H1 (cell line): ENCODE measurements at regions of chr1 and their contacts with region 1.

Region 1: DNA sequence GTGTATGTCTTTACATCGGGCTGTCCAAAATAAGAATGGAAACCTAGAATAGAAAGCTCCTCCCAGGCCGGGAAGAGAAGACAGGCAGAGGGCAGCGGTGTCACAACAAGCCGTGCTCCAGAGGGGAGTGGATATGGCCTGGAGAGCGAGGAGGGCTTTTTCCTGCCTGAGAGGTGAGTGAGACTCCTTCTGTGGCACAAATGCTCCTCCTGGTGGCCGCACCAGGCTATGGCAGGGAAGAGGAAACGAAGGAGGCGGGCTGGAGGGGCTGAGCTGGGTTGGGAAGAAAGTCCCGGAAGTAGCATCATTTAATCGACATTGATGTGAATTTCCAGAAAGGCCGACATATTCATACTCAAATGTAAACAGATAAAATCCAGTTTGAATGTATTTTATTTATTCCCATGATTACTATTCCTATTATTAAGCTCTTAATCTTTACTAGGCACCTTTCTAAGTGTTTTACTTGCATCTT is 54.7 kb downstream of the MEF2D start:
- DNase-seq: peak in 1 of 2 experiments; percentile 96
- H3K4me3 ChIP-seq: no peak overlapping the region
- H3K27ac ChIP-seq: no peak overlapping the region
- H3K4me1 ChIP-seq: no peaks in the 10 kb centered on the region; a peak in 4 of 7 replicates
- H3K27me3 ChIP-seq: peaks cover 19 to 39% (median 33%) of the 10 kb centered on the region in 4 experiments
- CTCF ChIP-seq: peak; percentile 95 to 98 (median 96)
- EP300 ChIP-seq: no peak
- POLR2A ChIP-seq: no peak
- RAD21 ChIP-seq: peak; percentile 94 to 98

Region 2: GRCh38 chr1:156346636-156347035 is 99.2 kb before region 1 on chr1:
- CTCF ChIA-PET with region 1: interaction called, 10 read pairs
- POLR2A ChIA-PET with region 1: interaction called, 3 read pairs
- DNase-seq: no peak
- H3K4me3 ChIP-seq: no peak overlapping the region
- H3K27ac ChIP-seq: no peak overlapping the region
- H3K4me1 ChIP-seq: no peaks in the 10 kb centered on the region
- H3K27me3 ChIP-seq: no peaks in the 10 kb centered on the region
- CTCF ChIP-seq: no peak
- EP300 ChIP-seq: no peak
- POLR2A ChIP-seq: no peak
- RAD21 ChIP-seq: no peak

Region 3: DNA sequence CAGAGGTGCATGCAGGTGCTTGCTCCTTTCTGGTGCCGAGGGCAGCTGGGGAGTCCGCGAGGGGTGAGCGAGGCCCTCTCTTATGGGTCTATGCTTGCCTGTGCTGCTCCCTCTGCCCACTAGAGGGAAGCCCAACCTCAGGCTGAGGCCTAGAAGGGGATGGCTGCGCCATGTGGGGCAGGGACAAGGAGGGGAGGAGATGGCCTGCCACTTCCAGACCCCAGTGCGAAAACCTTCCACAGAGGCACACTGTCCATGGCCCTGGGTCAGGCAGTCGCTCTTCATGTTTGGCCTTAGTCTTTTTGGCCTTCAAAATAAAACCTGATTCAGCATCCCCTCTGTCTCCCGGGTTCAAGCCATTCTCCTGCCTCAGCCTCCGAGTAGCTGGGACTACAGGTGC is 62.8 kb before region 1 on chr1:
- CTCF ChIA-PET with region 1: interaction called, 574 read pairs
- POLR2A ChIA-PET with region 1: interaction called, 11 read pairs
- DNase-seq: peak; percentile 67 to 89
- H3K4me3 ChIP-seq: no peak overlapping the region
- H3K27ac ChIP-seq: no peak overlapping the region
- H3K4me1 ChIP-seq: peaks cover 4 to 7% (median 6%) of the 10 kb centered on the region in 4 experiments; a peak in 6 of 7 replicates
- H3K27me3 ChIP-seq: peaks cover 10 to 24% (median 22%) of the 10 kb centered on the region in 4 experiments
- CTCF ChIP-seq: peak in 2 of 3 experiments; percentile 94 to 100; a peak in 3 of 4 replicates
- EP300 ChIP-seq: no peak
- POLR2A ChIP-seq: no peak
- RAD21 ChIP-seq: peak; percentile 92 to 96

Region 4: DNA sequence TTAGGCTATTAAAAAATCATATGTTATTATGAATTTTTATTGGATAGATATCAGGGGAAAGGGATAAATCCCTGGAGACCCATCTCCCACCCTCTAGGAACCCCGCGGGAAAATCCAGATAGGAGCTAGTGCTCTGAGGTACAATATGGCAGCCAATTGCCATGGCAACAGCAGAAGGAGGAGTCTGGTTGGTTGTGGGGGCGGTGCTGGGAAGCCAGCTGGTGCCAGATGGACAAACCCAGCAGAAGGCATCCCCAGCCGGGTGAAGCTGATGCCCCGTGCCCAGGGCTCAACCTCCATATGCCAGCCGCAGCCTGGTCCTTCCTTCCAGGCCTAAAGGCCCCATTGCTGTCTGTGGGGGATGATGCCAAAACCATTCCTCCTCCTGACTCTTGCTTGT is 38.5 kb before region 1 on chr1:
- CTCF ChIA-PET with region 1: interaction called, 22 read pairs
- POLR2A ChIA-PET with region 1: interaction called, 3 read pairs
- DNase-seq: no peak
- H3K4me3 ChIP-seq: no peak overlapping the region
- H3K27ac ChIP-seq: no peak overlapping the region
- H3K4me1 ChIP-seq: peaks cover 0 to 6% (median under 1%) of the 10 kb centered on the region in 4 experiments; a peak in 4 of 7 replicates
- H3K27me3 ChIP-seq: peaks cover 0 to 2% (median 0%) of the 10 kb centered on the region in 4 experiments; a peak in 3 of 7 replicates
- CTCF ChIP-seq: no peak
- EP300 ChIP-seq: no peak
- POLR2A ChIP-seq: no peak
- RAD21 ChIP-seq: no peak

Region 5: DNA sequence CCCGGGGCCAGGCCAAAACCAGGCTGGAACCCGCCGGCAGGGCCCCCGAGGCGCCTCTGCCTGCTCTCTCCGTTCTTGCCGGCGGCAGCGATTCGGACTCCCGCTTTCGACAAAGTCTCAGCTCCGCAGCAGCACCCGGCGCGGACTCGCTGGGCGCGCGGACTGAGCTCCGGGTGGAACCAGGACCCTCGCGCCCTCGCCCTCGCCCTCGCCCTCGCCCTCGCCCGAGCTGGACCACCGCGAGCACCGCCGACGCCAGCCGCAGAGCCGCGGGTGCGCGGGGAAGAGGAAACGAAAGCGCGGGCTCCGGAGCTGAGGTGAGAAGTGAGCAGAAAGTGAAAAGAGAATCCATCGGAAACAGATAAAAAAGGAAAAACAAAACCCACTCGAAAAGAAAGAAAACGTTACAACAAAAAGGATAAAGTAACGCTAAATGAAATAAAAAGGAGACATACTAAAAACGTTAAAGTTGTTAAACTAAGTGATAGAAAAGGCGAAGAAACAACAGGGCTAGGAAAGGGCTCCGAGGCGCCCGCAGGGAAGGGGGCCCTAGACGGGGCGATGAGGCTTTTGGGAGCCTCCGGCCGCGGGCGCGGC is 10.2 kb before region 1 on chr1:
- CTCF ChIA-PET with region 1: interaction called, 124 read pairs
- POLR2A ChIA-PET with region 1: interaction called, 23 read pairs
- DNase-seq: no peak
- H3K4me3 ChIP-seq: peak overlapping the region in 1 of 4 experiments; percentile 39; a peak in 2 of 8 replicates
- H3K27ac ChIP-seq: no peak overlapping the region
- H3K4me1 ChIP-seq: peaks cover 13 to 44% (median 17%) of the 10 kb centered on the region in 4 experiments
- H3K27me3 ChIP-seq: peaks cover 86 to 100% (median 98%) of the 10 kb centered on the region in 4 experiments
- CTCF ChIP-seq: no peak
- EP300 ChIP-seq: no peak
- POLR2A ChIP-seq: no peak
- RAD21 ChIP-seq: no peak

Region 6: DNA sequence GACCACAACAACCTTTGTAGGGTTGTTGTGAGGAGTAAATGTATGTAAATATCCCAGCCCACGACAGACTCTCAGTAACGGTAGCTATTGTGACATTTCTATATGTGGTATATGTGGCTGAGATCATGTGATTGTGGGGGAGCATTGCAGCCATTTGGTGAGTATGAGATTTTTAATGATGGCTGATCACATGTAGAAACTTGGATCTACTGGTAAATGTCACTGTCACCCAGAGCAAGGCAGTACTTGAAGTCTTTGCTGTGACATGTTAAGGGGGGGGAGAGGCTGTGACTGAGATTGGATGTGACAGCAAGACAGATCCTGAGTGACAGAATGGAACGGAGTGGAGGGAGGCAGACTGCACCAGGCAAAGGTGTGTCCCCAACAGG is 78.6 kb after region 1 on chr1:
- CTCF ChIA-PET with region 1: interaction called, 10 read pairs
- POLR2A ChIA-PET with region 1: no interaction called
- DNase-seq: no peak
- H3K4me3 ChIP-seq: no peak overlapping the region
- H3K27ac ChIP-seq: no peak overlapping the region
- H3K4me1 ChIP-seq: peaks cover 3 to 15% (median 11%) of the 10 kb centered on the region in 4 experiments
- H3K27me3 ChIP-seq: no peaks in the 10 kb centered on the region
- CTCF ChIP-seq: no peak
- EP300 ChIP-seq: no peak
- POLR2A ChIP-seq: no peak
- RAD21 ChIP-seq: no peak

Region 7: DNA sequence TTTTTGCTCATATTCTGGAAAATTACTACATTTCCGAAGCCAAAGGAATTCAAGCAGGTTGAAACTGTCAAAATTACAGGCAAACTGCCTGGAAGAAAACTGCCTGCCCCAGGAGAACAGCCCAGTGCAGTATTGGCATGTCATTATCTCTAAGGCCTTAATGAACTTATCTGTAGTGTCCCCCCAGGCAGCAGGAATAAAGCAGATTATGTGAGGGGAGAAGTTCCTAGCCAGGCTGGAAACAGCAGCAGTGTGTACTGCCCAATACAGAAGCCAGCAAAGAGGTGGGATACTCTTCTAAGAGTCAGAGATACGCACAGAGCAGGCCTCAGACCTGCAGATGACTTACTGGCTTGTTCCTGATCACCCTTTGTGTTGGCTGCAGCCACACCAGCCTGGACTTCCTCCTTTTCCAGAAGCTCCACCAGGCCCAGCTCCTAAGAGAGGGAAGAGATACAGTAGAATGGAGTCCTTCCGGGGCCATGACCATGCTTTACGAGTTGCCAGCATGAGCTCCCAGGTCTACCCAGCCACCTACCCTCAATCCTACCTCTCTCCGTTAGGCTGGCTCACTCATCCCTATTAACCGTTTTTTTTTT is 114.9 kb after region 1 on chr1:
- CTCF ChIA-PET with region 1: no interaction called
- POLR2A ChIA-PET with region 1: no interaction called
- DNase-seq: no peak
- H3K4me3 ChIP-seq: no peak overlapping the region
- H3K27ac ChIP-seq: no peak overlapping the region
- H3K4me1 ChIP-seq: no peaks in the 10 kb centered on the region
- H3K27me3 ChIP-seq: no peaks in the 10 kb centered on the region
- CTCF ChIP-seq: no peak
- EP300 ChIP-seq: no peak
- POLR2A ChIP-seq: no peak
- RAD21 ChIP-seq: no peak